ENCODE measurements at regions of chr20 and their contacts with region 1.

Region 1: DNA sequence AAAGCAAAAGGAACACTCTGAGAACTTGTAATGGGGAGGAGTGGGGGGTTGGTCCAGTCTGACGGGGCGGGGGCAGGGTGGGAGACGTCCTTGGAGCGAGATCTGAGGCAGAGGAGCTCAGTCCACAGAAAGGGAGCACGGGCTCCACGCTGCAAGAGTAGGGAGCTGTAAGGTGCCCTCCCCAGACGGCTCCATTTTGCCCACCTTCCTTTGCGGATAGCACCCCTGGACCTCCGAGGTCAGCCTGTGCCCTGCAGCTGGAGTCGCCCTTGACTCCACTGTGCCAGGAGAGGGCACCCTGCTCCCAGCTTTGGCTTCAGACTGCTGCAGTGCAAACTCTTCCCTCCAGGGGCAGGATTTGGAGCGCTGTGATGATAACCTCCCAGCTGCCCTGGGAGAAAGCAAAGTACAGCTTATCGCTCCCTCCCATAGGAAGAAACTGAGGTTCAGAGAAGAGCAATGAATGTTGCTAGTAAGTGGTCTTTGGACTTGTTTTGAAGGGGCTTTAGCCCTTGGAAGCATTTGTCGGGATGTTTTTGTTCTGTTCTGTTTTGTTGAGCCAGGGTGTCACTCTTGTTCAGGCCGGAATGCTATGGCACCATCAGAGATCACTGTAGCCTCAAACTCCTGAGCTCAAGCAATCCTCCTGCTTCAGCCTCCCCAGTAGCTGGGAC is 9.5 kb upstream of the AHCY start:
- DNase-seq: peak; percentile 94

Region 2: GRCh38 chr20:34473262-34473883 is 160.7 kb after region 1 on chr20:
- intact Hi-C with region 1: loop called in 1 of 2 experiments (anchors 10 kb)
- DNase-seq: no peak

Region 3: GRCh38 chr20:34522969-34523871 is 210.5 kb after region 1 on chr20:
- intact Hi-C with region 1: loop called in 1 of 2 experiments (anchors 10 kb)
- DNase-seq: no peak

Region 4: DNA sequence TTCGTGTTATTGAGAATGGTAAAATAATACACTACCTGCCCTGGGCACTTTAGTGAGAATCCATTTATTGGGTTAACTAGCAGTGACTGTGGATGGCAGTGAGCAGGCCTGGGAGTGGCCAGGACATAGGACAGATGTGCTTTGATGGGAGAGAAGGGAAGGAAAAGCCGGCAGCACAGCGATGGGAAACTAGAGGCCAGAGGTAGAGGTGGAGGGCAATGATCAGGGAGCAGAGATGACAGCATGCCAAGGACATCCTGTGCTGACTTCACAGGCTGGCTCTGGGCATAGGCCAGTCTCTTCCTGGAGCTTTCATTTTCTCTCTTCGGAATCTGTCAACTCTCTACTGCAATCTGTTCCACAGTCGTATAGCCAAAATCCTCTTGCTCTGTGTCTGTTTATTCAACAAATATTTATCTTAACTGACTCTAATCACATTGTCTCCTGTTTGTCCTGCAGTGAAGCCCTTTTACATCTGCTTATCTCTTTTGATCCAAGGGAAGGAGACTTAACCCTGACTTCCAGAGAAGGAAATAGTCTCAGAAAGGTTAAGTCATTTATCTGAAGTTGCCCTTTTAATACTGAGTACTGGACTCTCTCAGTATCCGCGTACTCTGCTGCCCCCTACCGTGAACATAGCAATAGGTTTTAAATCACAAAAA is 895.4 kb after region 1 on chr20:
- intact Hi-C with region 1: no loop called
- DNase-seq: peak; percentile 92